ENCODE measurements at regions of chr15 and their contacts with region 1.

Region 1: GRCh38 chr15:83919978-83920510 is 266.1 kb downstream of the ADAMTSL3 start:
- DNase-seq: no peak
- ATAC-seq: peak; percentile 71

Region 2: DNA sequence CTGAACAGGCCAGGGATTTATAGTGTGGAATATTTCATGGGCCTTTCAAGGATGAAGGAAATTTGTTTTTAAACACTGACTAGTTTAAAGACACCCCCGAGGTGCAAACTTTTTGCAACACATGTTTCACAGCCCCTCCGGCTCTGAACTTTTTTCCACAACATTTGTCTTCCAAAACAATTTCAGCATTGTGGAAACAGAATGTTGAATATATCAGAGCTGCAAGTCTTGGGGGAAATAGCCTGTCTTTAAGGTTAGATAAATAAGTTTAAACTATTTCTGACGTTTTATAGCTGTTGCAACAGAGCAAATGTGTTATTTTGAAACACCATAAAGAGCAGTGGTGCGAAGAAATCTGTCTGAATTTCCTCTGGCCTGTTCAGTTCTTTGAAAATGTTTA is 86.4 kb after region 1 on chr15:
- intact Hi-C with region 1: loop called (anchors 5 kb)
- DNase-seq: no peak
- ATAC-seq: peak; percentile 46

Measured in Right ventricle myocardium inferior (tissue), 1 donor.